ENCODE measurements at regions of chr19 and their contacts with region 1.

Region 1: DNA sequence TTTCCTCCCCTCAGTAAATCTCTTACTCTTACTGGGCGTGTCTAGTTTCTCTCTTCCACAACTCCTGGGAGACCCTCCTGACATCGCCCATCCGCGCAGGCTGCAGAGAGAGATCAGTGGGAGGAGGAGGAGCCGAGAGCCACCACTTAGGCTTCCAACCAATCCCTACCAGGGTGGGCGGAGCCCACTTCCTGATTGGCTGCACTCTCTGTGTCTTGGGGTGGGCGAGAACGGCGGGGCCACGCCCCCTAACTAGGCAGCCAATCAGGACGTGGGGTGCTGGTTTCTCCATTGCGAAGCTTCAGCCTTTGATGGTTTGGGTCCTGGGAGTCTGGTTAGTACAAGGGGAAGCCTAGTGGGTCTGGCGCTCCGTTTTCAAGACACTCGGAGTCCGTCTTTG is at the start of gene PMIS2:
- DNase-seq: no peak
- H3K4me3 ChIP-seq: no peak within 1 kb of the TSS
- H3K27ac ChIP-seq: no peak within 1 kb of the TSS
- H3K4me1 ChIP-seq: no peaks in the 10 kb centered on the region
- H3K27me3 ChIP-seq: no peaks in the 10 kb centered on the region
- CTCF ChIP-seq: no peak
- total RNA-seq, gene PMIS2: not detected

Region 2: DNA sequence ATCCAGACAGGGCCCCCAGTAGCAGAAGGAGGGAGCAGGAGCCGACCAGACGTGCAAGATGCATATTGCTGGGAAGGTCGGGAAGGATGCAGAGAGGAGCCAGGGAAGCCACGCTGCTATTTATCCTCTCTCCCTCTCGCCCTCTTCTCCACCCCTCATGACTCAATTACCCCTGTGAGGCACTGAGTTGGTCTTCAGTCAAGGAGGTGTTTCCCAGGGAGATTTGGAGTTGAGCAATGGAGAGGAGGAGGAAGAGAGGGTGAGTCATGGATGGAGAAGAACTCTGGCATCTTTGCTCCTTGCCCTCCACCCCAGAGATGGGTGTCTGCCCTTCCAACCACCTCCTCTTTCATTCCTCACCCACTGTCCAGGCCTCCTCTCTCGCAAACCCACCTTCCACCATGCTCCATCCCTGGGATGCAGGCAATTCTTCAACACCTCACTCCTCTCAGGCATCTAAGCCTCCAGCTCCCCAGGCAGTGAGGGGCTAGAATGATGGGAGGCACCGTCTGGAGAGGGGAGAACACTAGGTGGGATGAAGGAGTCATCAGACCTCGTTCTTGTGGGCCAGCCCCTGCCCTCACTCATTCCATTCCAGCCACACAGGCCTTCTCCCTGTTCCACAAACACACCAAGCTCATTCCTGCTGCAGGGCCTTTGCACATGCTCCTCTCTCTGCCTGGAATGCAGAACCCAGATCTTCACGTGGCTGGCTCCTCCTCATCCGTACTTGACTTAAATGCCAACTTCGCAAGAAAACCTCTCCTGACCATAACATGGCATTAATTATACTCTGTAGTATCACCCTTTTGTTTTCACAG is 57.4 kb before region 1 on chr19 and contains the start of gene SBSN:
- CTCF ChIA-PET with region 1: no interaction called
- dilution Hi-C with region 1: loop called (anchors 5 kb)
- in situ Hi-C with region 1: no loop called
- intact Hi-C with region 1: no loop called
- DNase-seq: peak; percentile 86
- H3K4me3 ChIP-seq: no peak within 1 kb of the TSS
- H3K27ac ChIP-seq: no peak within 1 kb of the TSS
- H3K4me1 ChIP-seq: peaks cover under 1% of the 10 kb centered on the region
- H3K27me3 ChIP-seq: no peaks in the 10 kb centered on the region
- CTCF ChIP-seq: no peak
- total RNA-seq, gene SBSN: 0.17 to 2.9 TPM

Region 3: GRCh38 chr19:35636651-35637050 is 50.8 kb after region 1 on chr19:
- CTCF ChIA-PET with region 1: no interaction called
- dilution Hi-C with region 1: loop called (anchors 5 kb)
- in situ Hi-C with region 1: no loop called
- intact Hi-C with region 1: no loop called
- DNase-seq: no peak
- H3K4me3 ChIP-seq: no peak overlapping the region
- H3K27ac ChIP-seq: no peak overlapping the region
- H3K4me1 ChIP-seq: peaks cover 4% of the 10 kb centered on the region
- H3K27me3 ChIP-seq: no peaks in the 10 kb centered on the region
- CTCF ChIP-seq: no peak

Region 4: DNA sequence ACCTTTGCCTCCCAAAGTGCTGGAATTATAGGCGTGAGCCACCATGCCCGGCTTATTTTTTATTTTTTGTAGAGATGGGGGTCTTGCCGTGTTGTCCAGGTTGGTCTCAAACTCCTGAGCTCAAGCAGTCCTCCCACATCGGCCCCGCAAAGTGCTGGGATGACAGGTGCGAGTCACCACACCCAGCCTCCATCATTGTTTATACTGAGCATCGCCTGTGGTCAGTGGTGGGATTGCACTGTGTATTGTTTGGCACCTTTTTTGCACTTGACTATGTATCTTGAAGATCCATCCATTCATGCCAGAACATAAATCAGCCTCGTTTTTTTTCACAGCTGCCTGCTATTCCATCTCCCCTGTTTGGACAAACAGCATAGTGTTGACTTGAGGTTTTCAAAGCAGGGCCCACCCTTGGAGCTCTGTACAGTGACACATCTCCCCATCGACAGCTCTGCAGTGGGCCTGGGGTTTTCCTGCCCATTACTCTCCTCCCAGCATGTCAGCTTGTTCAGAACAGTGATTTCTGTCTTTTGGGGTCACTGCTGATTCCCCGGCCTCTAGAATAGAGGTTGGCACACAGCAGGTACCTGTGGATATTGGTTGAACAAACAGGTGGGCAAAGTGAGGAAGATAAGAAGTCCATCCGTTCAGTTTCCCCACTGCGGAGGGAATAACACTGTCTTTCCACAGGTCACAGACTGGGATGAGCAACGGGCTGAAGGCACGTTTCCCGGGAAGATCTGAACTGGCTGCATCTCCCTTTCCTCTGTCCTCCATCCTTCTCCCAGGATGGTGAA is 72.3 kb after region 1 on chr19:
- CTCF ChIA-PET with region 1: no interaction called
- dilution Hi-C with region 1: no loop called
- in situ Hi-C with region 1: no loop called
- intact Hi-C with region 1: no loop called
- DNase-seq: no peak
- H3K4me3 ChIP-seq: no peak overlapping the region
- H3K27ac ChIP-seq: no peak overlapping the region
- H3K4me1 ChIP-seq: no peaks in the 10 kb centered on the region
- H3K27me3 ChIP-seq: no peaks in the 10 kb centered on the region
- CTCF ChIP-seq: peak in 1 of 2 donors; percentile 14

Measured in mammary epithelial cell (primary cell).